Common myeloid progenitor, CD34-positive (primary cell): ENCODE measurements at regions of chr2 and their contacts with region 1.

Region 1: DNA sequence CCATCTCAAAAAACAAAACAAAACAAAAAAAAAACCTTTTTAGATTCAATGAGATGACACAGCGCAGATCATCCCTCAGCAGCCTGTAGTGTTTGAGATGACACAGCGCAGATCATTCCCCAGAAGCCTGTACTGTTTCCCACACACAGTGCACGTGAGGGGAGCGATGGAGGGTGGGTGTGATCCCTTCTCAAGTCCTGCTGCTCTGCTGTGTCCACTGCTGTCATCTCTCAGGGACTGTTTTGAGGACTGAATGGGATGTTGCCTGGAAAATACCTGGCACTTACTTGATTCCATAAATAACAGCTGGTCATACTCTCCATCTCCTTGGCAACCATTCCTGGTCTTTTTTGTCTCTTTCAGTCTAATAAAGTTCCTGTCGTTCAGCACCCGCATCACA is 25.7 kb downstream of the TGOLN2 start:
- DNase-seq: no peak
- H3K4me3 ChIP-seq: no peak overlapping the region
- H3K27ac ChIP-seq: no peak overlapping the region
- H3K4me1 ChIP-seq: peaks cover 0 to under 1% (median 0%) of the 10 kb centered on the region in 4 experiments
- H3K27me3 ChIP-seq: peaks cover 0 to 2% (median 2%) of the 10 kb centered on the region in 5 experiments

Region 2: GRCh38 chr2:85266146-85267041 is 35.7 kb before region 1 on chr2:
- CTCF ChIA-PET with region 1: interaction called, 13 read pairs
- POLR2A ChIA-PET with region 1: no interaction called
- DNase-seq: peak; percentile 34 to 62 (median 48)
- H3K4me3 ChIP-seq: no peak overlapping the region
- H3K27ac ChIP-seq: no peak overlapping the region
- H3K4me1 ChIP-seq: no peaks in the 10 kb centered on the region
- H3K27me3 ChIP-seq: no peaks in the 10 kb centered on the region

Region 3: DNA sequence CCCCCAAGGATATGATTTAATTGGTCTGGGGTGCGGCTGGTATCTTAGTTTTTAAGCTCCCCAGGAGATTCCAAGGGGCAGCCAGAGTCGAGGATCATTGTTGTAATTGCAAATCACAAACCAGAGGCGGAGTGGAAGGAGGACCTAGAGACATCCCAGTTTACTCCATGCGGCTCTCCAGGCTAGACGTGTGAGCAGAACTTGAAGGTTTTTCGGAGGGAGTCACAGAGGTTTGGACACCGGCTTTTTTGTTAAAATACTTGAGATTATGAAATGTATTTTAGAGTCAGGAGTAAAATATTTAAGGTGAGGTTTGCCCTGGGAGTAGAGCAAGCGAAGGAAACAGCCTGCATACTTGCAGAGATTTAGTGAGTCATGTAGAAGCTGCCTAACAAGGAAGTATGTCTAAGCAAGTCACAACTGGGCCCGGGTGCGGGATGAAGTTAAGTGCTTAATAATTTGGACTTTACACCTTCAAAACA is 13.8 kb before region 1 on chr2:
- CTCF ChIA-PET with region 1: interaction called, 31 read pairs
- POLR2A ChIA-PET with region 1: no interaction called
- DNase-seq: no peak
- H3K4me3 ChIP-seq: no peak overlapping the region
- H3K27ac ChIP-seq: no peak overlapping the region
- H3K4me1 ChIP-seq: peaks cover 0 to 14% (median 2%) of the 10 kb centered on the region in 4 experiments
- H3K27me3 ChIP-seq: no peaks in the 10 kb centered on the region

Region 4: DNA sequence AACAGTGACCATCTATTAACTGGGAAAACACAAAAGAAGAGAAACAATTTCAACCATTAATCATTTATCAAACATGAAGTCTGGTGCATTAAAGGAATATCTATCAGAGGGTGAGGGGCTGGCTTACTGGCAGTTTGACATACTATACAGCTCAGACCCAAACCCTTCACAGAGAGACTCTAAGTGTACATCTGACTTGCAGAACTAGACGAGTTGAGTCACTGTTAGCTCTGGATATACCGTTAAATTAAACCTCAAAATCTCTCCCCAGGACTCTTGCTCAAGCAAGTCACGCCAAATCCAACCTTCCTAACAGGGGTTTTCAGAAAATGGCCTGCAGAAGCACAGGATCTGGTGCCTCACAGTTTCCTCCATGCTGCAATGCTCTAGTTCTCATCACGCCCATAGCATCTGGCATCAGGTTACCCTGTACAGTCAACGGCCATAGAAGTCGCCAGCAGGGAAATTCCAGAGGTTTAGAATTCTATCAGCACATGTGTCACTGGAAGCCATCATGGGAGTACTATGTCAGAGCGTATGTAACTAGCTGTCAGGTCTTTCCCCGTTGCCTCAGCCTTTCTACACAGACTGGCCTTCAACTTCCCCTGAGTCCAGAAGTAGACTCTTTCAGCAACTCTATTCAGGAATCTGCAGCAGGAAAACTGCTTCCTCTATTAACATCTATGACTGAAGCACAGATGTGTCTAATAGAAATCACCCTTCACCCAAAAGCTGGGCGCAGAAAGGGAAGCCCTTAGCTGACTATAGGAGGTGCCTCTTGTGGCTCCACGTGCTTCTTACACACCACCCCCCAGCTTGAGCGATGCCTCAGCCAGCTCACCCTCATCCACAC is 16.3 kb after region 1 on chr2:
- CTCF ChIA-PET with region 1: interaction called, 13 read pairs
- POLR2A ChIA-PET with region 1: no interaction called
- DNase-seq: no peak
- H3K4me3 ChIP-seq: no peak overlapping the region
- H3K27ac ChIP-seq: no peak overlapping the region
- H3K4me1 ChIP-seq: peaks cover 0 to 6% (median under 1%) of the 10 kb centered on the region in 4 experiments
- H3K27me3 ChIP-seq: no peaks in the 10 kb centered on the region

Region 5: DNA sequence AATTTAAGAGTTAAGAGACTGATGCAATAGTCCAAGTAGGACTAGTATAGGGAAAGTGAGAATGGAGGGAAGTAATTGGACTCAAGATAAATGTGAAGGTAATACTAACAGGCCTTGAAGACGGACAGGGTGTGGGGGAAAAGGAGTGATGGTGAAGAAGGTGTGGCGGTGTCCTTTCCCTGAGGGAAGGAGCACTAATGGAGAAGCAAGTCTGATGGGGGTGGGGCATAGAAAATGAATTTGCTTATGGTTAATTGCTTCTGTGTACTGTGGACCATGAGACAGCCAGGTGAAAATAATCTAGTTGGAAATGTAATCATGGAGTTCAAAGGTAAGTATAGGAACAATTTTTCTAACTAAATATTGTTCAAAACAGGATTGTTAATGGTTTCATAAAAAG is 32.8 kb after region 1 on chr2:
- CTCF ChIA-PET with region 1: no interaction called
- POLR2A ChIA-PET with region 1: no interaction called
- DNase-seq: no peak
- H3K4me3 ChIP-seq: no peak overlapping the region
- H3K27ac ChIP-seq: no peak overlapping the region
- H3K4me1 ChIP-seq: no peaks in the 10 kb centered on the region
- H3K27me3 ChIP-seq: no peaks in the 10 kb centered on the region